Naive thymus-derived CD8-positive, alpha-beta T cell (primary cell): ENCODE measurements at regions of chr7 and their contacts with region 1.

Region 1: GRCh38 chr7:39948956-39949928 is 814 bp upstream of the CDK13 start:
- DNase-seq: peak; percentile 90 to 100 (median 99)
- ATAC-seq: peak; percentile 69 to 73
- H3K4me3 Mint-ChIP-seq: peak overlapping the region; percentile 89 to 100 (median 96)
- H3K27ac Mint-ChIP-seq: peak overlapping the region; percentile 98 to 100 (median 100)
- H3K4me1 Mint-ChIP-seq: peaks cover 23 to 41% (median 37%) of the 10 kb centered on the region in 4 donors
- H3K27me3 Mint-ChIP-seq: no peaks in the 10 kb centered on the region

Region 2: GRCh38 chr7:39732837-39733804 is 216.1 kb before region 1 on chr7:
- POLR2A ChIA-PET with region 1: interaction called, 14 read pairs
- DNase-seq: peak; percentile 84 to 97 (median 94)
- ATAC-seq: peak; percentile 90 to 92
- H3K4me3 Mint-ChIP-seq: peak overlapping the region; percentile 89 to 98 (median 94)
- H3K27ac Mint-ChIP-seq: peak overlapping the region; percentile 89 to 98 (median 97)
- H3K4me1 Mint-ChIP-seq: peaks cover 19 to 54% (median 50%) of the 10 kb centered on the region in 4 donors
- H3K27me3 Mint-ChIP-seq: no peaks in the 10 kb centered on the region

Region 3: GRCh38 chr7:39971924-39972323 is 22.7 kb after region 1 on chr7:
- POLR2A ChIA-PET with region 1: interaction called, 22 read pairs
- DNase-seq: no peak
- ATAC-seq: no peak
- H3K4me3 Mint-ChIP-seq: peak overlapping the region in 2 of 10 donors; percentile 14 to 62
- H3K27ac Mint-ChIP-seq: peak overlapping the region in 4 of 10 donors; percentile 37 to 85 (median 46)
- H3K4me1 Mint-ChIP-seq: peaks cover 31 to 88% (median 78%) of the 10 kb centered on the region in 4 donors
- H3K27me3 Mint-ChIP-seq: no peaks in the 10 kb centered on the region

Region 4: GRCh38 chr7:40047661-40048060 is 98.4 kb after region 1 on chr7:
- POLR2A ChIA-PET with region 1: interaction called, 18 read pairs
- DNase-seq: no peak
- ATAC-seq: no peak
- H3K4me3 Mint-ChIP-seq: no peak overlapping the region
- H3K27ac Mint-ChIP-seq: peak overlapping the region in 1 of 10 donors; percentile 18
- H3K4me1 Mint-ChIP-seq: peaks cover 0 to 6% (median 2%) of the 10 kb centered on the region in 4 donors
- H3K27me3 Mint-ChIP-seq: no peaks in the 10 kb centered on the region

Region 5: GRCh38 chr7:40134428-40135316 is 185.4 kb after region 1 on chr7 and contains the starts of genes MPLKIP and SUGCT:
- POLR2A ChIA-PET with region 1: interaction called, 43 read pairs
- DNase-seq: peak; percentile 75 to 99 (median 88)
- ATAC-seq: peak; percentile 83 to 88
- H3K4me3 Mint-ChIP-seq: peak within 1 kb of the TSS; percentile 90 to 100 (median 99)
- H3K27ac Mint-ChIP-seq: peak within 1 kb of the TSS; percentile 92 to 99 (median 98)
- H3K4me1 Mint-ChIP-seq: peaks cover 10 to 46% (median 36%) of the 10 kb centered on the region in 4 donors
- H3K27me3 Mint-ChIP-seq: peaks cover 0 to 10% (median 2%) of the 10 kb centered on the region in 5 donors
- polyA plus RNA-seq, gene MPLKIP: 55.7 to 66.9 (median 61.5) TPM
- polyA plus RNA-seq, gene SUGCT: 1.3 to 3.0 (median 1.6) TPM